Psoas muscle (tissue), 8 donors: ENCODE measurements at regions of chr9 and their contacts with region 1.

Region 1: GRCh38 chr9:84244850-84245249 is 95.7 kb downstream of the SLC28A3 start:
- DNase-seq: no peak
- ATAC-seq: no peak
- H3K4me3 ChIP-seq: no peak overlapping the region
- H3K27ac ChIP-seq: no peak overlapping the region
- H3K4me1 ChIP-seq: no peaks in the 10 kb centered on the region
- H3K27me3 ChIP-seq: no peaks in the 10 kb centered on the region
- CTCF ChIP-seq: no peak

Region 2: GRCh38 chr9:84230355-84231145 is 14.3 kb before region 1 on chr9:
- intact Hi-C with region 1: loop called in 1 of 2 experiments (anchors 1 kb)
- DNase-seq: no peak
- ATAC-seq: no peak
- H3K4me3 ChIP-seq: no peak overlapping the region
- H3K27ac ChIP-seq: no peak overlapping the region
- H3K4me1 ChIP-seq: no peaks in the 10 kb centered on the region
- H3K27me3 ChIP-seq: no peaks in the 10 kb centered on the region
- CTCF ChIP-seq: no peak

Region 3: GRCh38 chr9:84315278-84315877 is 70.5 kb after region 1 on chr9:
- intact Hi-C with region 1: no loop called
- DNase-seq: peak in 1 of 2 donors; percentile 37
- ATAC-seq: peak in 2 of 4 donors; percentile 36 to 67
- H3K4me3 ChIP-seq: no peak overlapping the region
- H3K27ac ChIP-seq: no peak overlapping the region
- H3K4me1 ChIP-seq: no peaks in the 10 kb centered on the region
- H3K27me3 ChIP-seq: peaks cover 0 to 2% (median 0%) of the 10 kb centered on the region in 3 donors
- CTCF ChIP-seq: peak; percentile 82